ENCODE measurements at regions of chr9 and their contacts with region 1.

Region 1: DNA sequence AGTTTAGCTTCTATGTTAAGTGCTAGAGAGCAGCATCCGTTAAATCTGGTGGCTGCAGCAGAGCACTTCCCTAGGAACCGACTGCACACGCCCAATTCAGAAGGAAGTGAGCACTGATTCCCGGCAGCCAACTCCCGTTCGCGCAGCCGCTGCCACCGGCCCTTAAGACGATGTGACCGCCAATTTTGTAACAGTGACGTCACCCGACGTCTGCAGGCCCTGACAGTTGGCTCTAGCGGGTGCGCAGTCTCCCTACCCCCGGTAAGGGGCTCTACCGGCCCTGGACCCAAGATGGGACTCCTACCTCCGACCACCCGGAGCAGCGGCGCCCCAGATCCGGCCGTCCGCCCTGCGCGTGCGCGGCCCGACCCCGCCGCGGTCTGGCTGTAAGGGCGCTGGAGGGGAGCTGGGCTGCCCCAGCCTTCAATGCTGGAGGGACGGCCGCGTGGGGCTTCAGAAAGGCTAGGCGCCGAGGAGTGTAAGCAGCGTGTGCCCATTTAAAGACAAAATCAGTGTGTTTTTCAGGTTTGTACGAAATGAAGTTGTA is 19.1 kb downstream of the DNAJA1 start:
- DNase-seq: peak; percentile 38 to 83
- H3K4me3 ChIP-seq: peak overlapping the region; percentile 37 to 61 (median 44)
- H3K27ac ChIP-seq: no peak overlapping the region
- H3K4me1 ChIP-seq: peaks cover 0 to 8% (median 3%) of the 10 kb centered on the region in 4 experiments; a peak in 4 of 7 replicates
- H3K27me3 ChIP-seq: no peaks in the 10 kb centered on the region
- CTCF ChIP-seq: no peak
- EP300 ChIP-seq: no peak
- POLR2A ChIP-seq: peak in 1 of 2 experiments; percentile 13; a peak in 2 of 3 replicates
- RAD21 ChIP-seq: no peak

Region 2: GRCh38 chr9:32776201-32776600 is 268.0 kb before region 1 on chr9:
- CTCF ChIA-PET with region 1: no interaction called
- POLR2A ChIA-PET with region 1: no interaction called
- DNase-seq: no peak
- H3K4me3 ChIP-seq: no peak overlapping the region
- H3K27ac ChIP-seq: no peak overlapping the region
- H3K4me1 ChIP-seq: no peaks in the 10 kb centered on the region
- H3K27me3 ChIP-seq: no peaks in the 10 kb centered on the region
- CTCF ChIP-seq: no peak
- EP300 ChIP-seq: no peak
- POLR2A ChIP-seq: no peak
- RAD21 ChIP-seq: no peak

Region 3: GRCh38 chr9:33032865-33033264 is 11.3 kb before region 1 on chr9:
- CTCF ChIA-PET with region 1: interaction called, 5 read pairs
- POLR2A ChIA-PET with region 1: interaction called, 84 read pairs
- DNase-seq: no peak
- H3K4me3 ChIP-seq: no peak overlapping the region
- H3K27ac ChIP-seq: no peak overlapping the region
- H3K4me1 ChIP-seq: no peaks in the 10 kb centered on the region
- H3K27me3 ChIP-seq: no peaks in the 10 kb centered on the region
- CTCF ChIP-seq: no peak
- EP300 ChIP-seq: no peak
- POLR2A ChIP-seq: no peak
- RAD21 ChIP-seq: no peak

Measured in H1 (cell line).